GM10248 (cell line): ENCODE measurements at regions of chr3 and their contacts with region 1.

Region 1: GRCh38 chr3:16290007-16290826 is 25.2 kb downstream of the OXNAD1 start:
- DNase-seq: peak; percentile 39
- CTCF ChIP-seq: peak; percentile 88

Region 2: DNA sequence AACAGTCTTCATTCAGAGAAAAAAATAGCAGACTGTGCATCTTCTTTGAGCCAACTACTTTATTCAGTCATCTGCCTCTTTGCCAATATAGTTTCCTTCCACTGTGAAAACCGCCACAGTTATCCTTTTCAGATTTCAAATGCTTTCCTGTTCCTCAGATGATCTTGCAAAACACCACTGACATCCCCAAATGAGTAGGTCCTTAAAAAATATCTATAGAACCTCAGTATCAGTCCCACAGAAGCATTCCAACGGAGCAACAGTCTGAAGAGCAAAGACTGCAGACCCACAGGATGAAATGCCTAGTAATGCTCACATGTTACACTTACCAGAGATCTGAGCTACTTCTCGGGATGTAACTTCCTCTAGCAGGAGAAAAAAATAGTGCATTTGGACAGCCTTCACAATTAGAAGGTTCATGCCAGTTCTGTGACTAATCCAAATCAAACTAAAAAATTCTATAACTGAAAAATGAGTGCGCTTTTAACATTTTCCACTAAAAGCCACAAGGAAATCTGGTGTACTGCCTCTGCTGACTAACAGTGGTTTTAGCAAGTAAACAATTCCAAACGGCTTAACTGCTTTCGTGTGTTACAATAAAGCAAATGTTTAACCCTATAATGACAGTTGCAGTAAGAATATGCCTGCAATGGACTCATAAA is 492.4 kb before region 1 on chr3 and contains the start of gene ANKRD28:
- CTCF ChIA-PET with region 1: no interaction called
- POLR2A ChIA-PET with region 1: no interaction called
- DNase-seq: no peak
- CTCF ChIP-seq: no peak

Region 3: GRCh38 chr3:16247276-16248061 is 42.7 kb before region 1 on chr3:
- CTCF ChIA-PET with region 1: no interaction called
- POLR2A ChIA-PET with region 1: no interaction called
- DNase-seq: peak; percentile 78
- CTCF ChIP-seq: peak; percentile 94

Region 4: DNA sequence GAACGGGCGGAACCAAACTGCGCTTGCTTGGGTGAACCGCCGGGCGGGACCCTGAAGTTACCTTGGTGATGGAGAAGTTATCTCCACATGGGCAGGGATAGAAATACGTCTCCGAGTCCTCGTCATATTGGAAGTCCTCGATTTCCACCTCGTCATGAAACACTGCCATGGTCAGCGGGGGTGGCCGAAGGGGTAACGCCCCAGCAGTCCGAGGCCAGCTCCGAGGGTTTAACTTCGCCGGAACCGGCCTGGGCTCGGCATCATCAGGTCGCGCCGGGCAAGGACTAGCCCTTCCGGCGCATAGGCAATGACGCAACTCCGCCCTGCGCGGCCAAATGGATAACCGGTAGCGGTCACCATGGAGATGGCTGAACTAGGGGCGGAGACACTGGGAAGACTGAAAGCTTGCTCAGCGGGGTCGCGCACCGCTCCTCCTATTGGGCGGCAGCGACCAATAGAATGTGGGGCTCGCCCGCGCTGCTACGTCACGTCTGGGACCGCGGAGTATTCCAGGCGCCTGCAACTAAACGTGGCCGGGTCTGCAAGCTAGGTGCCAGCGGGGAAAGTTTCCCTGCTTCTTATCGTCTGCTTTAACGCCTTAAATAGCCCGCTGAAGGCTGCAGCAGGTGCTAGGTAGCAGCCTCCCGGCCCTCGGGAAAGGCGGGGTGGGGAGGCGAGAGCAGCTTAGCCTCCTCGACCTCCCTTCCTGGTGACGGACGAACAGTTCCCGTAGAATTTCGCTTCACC is 25.3 kb before region 1 on chr3 and contains the starts of genes DPH3 and OXNAD1:
- CTCF ChIA-PET with region 1: interaction called, 55 read pairs
- POLR2A ChIA-PET with region 1: interaction called, 3 read pairs
- DNase-seq: peak; percentile 98
- CTCF ChIP-seq: no peak

Region 5: GRCh38 chr3:16300881-16301359 is 10.7 kb after region 1 on chr3:
- CTCF ChIA-PET with region 1: interaction called, 30 read pairs
- POLR2A ChIA-PET with region 1: no interaction called
- DNase-seq: no peak
- CTCF ChIP-seq: no peak

Region 6: GRCh38 chr3:16349986-16350596 is 59.9 kb after region 1 on chr3:
- CTCF ChIA-PET with region 1: no interaction called
- POLR2A ChIA-PET with region 1: no interaction called
- DNase-seq: no peak
- CTCF ChIP-seq: no peak

Region 7: DNA sequence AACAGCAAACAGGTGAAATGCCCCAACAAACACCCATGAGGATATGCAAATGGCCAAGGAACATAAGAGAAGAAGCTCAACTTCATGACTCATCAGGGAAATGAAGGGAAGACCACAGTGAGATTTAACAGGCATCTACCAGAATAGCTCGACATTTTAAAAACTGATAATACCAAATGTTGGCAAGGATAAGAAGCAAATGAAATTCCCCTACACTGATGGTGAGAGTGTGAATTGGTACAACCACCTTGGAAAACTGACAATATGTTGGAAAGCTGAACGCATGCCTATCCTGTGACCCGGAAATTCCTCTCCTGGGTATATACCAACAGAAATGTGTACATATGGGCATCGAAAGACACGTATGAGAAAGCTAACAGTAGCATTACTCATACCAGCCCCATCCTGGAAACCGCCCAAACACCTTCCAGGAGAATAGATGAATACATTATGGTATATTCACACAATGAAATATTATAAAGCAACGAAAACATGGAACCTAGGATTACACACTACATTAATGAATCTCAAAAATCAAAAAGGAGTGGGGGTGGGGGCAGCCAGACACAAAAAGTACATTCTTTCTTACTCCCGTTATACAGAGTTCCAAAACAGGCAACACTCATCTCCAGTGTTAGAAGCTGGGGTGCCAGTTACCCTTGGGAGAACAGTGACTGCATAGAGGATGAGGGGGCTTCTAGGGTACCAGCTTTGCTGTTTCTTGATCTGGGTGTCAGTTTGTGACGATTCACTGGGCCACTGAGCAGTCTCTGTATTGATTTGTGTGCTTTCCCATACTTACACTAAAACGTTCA is 206.4 kb after region 1 on chr3:
- CTCF ChIA-PET with region 1: interaction called, 24 read pairs
- POLR2A ChIA-PET with region 1: no interaction called
- DNase-seq: peak; percentile 34
- CTCF ChIP-seq: no peak

Region 8: GRCh38 chr3:16550676-16551341 is 260.6 kb after region 1 on chr3:
- CTCF ChIA-PET with region 1: interaction called, 72 read pairs
- POLR2A ChIA-PET with region 1: no interaction called
- DNase-seq: peak; percentile 65
- CTCF ChIP-seq: peak; percentile 90

Region 9: DNA sequence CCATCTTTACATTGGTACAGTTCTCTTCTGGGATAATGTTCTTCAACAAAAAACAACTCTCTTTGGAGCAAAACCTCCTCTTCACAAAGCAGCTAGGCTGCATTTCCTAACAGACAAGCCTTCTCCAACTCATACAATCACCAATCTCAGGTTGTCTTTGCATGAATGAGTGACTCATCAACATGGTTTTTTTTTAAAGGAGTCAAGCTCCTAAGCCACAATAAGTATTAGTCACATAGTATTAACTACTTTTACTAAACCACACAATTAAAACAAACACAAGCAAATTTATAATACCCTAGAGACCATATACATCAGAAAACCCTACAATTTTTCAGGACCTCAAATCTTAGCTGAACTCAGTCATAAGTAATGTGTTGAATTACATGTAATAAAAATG is 1314.8 kb after region 1 on chr3:
- CTCF ChIA-PET with region 1: no interaction called
- POLR2A ChIA-PET with region 1: no interaction called
- DNase-seq: no peak
- CTCF ChIP-seq: no peak